ENCODE measurements at regions of chr6 and their contacts with region 1.

Region 1: DNA sequence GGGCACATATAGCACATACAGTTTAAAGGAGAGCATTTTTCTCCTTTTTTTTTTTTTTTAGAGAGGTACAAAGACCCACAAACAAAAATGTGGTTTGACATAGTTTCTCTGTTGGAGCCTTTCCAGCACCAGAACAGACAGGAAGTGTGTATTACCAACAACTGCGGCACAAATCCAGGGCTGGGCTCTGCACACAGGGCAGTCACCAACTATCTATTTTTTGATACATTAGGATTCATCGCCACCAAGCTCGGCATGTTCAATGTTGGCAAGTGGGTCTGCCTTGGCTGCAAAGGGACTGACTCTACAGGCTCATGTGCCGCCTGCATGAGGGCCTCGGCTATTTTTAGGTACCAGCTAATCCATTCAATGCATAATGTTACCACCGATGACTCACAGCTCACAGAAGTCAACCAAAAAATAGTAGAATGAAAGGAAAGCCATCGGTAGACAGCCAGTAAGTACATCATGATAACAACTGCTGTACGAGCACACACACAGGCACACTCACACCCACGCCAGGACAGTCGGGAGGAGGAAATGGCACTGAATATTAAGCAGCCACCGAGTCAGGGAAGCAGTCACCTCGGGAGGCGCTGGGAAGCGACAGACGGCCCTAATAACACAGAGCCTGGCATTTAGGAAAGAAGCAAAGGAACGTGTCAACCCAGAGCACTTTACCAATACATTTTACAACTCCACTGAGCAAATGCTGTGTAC is 81.6 kb downstream of the GMPR start:
- DNase-seq: peak; percentile 80
- ATAC-seq: peak; percentile 62
- H3K4me3 Mint-ChIP-seq: peak overlapping the region; percentile 67
- H3K27ac Mint-ChIP-seq: peak overlapping the region; percentile 93
- H3K4me1 Mint-ChIP-seq: peaks cover 76% of the 10 kb centered on the region
- H3K27me3 Mint-ChIP-seq: no peaks in the 10 kb centered on the region

Region 2: DNA sequence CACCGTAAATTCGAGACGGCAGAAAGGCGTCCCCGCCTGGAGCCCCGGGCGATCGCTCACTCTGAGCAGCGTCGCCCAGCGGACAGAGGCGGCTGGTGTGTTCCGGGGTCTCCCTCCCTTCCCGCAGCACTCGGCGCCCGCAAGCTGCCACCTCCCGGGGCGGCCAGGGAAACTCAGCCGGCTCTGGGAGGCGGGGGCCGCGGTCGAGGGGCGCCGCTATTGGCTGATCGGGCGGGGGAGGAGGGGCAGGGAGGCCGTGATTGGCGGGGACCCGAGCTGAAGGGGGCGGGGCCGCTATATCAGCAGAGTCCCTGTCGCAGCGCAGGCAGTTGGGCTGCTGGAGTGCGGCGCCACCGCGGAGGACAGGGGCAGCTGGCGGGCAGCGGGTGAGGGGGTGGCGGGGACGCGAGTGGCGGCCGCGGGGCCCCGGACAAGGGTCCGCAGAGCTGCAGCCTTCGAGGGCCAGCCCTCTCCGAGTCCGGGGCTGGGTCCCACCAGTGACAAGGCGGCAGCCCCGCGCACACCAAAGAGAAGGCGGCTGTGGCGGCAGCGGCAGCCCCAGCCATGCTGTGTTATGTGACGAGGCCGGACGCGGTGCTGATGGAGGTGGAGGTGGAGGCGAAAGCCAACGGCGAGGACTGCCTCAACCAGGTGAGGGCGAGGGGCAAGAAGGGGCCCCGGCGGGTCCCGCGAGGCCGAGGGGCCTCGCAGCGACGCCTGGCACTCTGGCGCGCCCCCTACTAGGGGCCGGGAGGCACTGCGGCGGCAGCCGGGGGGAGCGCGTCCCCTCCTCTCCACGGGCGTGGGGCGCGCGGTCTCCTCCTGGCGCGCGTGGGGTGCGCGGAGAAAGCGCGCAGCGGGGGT is 191.0 kb before region 1 on chr6 and contains the start of gene MYLIP:
- CTCF ChIA-PET with region 1: interaction called, 4 read pairs
- POLR2A ChIA-PET with region 1: no interaction called
- intact Hi-C with region 1: loop called in 1 of 2 experiments (anchors 5 kb)
- DNase-seq: peak; percentile 98
- ATAC-seq: peak; percentile 82
- H3K4me3 Mint-ChIP-seq: peak within 1 kb of the TSS; percentile 90
- H3K27ac Mint-ChIP-seq: peak within 1 kb of the TSS; percentile 86
- H3K4me1 Mint-ChIP-seq: peaks cover 24% of the 10 kb centered on the region
- H3K27me3 Mint-ChIP-seq: no peaks in the 10 kb centered on the region
- total RNA-seq, gene MYLIP: 9.2 to 10.6 TPM

Region 3: GRCh38 chr6:16332175-16332542 is 12.2 kb after region 1 on chr6:
- CTCF ChIA-PET with region 1: interaction called, 33 read pairs
- POLR2A ChIA-PET with region 1: no interaction called
- intact Hi-C with region 1: loop called (anchors 1 kb)
- DNase-seq: peak; percentile 91
- ATAC-seq: peak; percentile 98
- H3K4me3 Mint-ChIP-seq: no peak overlapping the region
- H3K27ac Mint-ChIP-seq: no peak overlapping the region
- H3K4me1 Mint-ChIP-seq: no peaks in the 10 kb centered on the region
- H3K27me3 Mint-ChIP-seq: no peaks in the 10 kb centered on the region

Region 4: GRCh38 chr6:16533721-16534136 is 213.8 kb after region 1 on chr6:
- CTCF ChIA-PET with region 1: no interaction called
- POLR2A ChIA-PET with region 1: interaction called, 3 read pairs
- intact Hi-C with region 1: loop called in 1 of 2 experiments (anchors 1 kb)
- DNase-seq: no peak
- ATAC-seq: peak; percentile 89
- H3K4me3 Mint-ChIP-seq: no peak overlapping the region
- H3K27ac Mint-ChIP-seq: peak overlapping the region; percentile 75
- H3K4me1 Mint-ChIP-seq: peaks cover 29% of the 10 kb centered on the region
- H3K27me3 Mint-ChIP-seq: no peaks in the 10 kb centered on the region

Region 5: DNA sequence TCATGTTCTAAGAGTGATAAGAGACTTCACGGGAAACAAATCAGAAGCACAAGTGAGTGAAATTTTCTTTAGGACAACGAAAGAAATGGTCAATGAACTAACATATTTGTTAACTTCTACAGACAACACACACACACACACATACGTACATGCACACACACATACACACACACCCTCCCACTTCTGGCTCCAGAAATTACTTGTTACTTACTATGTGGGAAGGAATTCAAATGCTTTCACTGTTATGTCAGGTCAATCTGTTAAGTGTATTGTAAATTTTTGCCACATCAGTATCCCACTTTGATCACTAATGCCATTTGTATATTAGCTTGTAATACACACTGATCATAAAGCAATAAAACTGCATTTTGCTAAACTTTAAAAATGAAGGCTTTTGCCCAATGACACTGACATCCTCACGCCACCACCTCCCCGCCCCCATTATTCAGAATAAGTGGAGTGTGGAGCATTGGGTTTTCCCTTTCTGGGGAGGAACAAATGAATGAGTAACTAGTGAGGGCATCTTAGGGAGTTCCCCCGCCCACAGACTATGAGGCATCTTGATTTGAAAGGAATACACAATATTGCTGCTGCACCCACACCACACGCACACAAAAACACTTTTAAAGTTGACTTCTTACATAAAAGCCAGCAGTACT is 365.1 kb after region 1 on chr6:
- CTCF ChIA-PET with region 1: interaction called, 3 read pairs
- POLR2A ChIA-PET with region 1: no interaction called
- intact Hi-C with region 1: loop called (anchors 1 to 10 kb)
- DNase-seq: peak; percentile 95
- ATAC-seq: peak; percentile 76
- H3K4me3 Mint-ChIP-seq: peak overlapping the region; percentile 43
- H3K27ac Mint-ChIP-seq: peak overlapping the region; percentile 78
- H3K4me1 Mint-ChIP-seq: peaks cover 86% of the 10 kb centered on the region
- H3K27me3 Mint-ChIP-seq: no peaks in the 10 kb centered on the region

Region 6: GRCh38 chr6:17015144-17015543 is 695.2 kb after region 1 on chr6:
- CTCF ChIA-PET with region 1: interaction called, 4 read pairs
- POLR2A ChIA-PET with region 1: interaction called, 4 read pairs
- intact Hi-C with region 1: loop called (anchors 1 to 5 kb)
- DNase-seq: peak; percentile 47
- ATAC-seq: peak; percentile 92
- H3K4me3 Mint-ChIP-seq: peak overlapping the region; percentile 36
- H3K27ac Mint-ChIP-seq: peak overlapping the region; percentile 38
- H3K4me1 Mint-ChIP-seq: peaks cover 17% of the 10 kb centered on the region
- H3K27me3 Mint-ChIP-seq: peaks cover 27% of the 10 kb centered on the region

Measured in activated CD4-positive, alpha-beta T cell treated with anti-CD3 and anti-CD28 coated beads for 36 hours (primary cell).